HEK293T (cell line): ENCODE measurements at regions of chr7 and their contacts with region 1.

Region 1: DNA sequence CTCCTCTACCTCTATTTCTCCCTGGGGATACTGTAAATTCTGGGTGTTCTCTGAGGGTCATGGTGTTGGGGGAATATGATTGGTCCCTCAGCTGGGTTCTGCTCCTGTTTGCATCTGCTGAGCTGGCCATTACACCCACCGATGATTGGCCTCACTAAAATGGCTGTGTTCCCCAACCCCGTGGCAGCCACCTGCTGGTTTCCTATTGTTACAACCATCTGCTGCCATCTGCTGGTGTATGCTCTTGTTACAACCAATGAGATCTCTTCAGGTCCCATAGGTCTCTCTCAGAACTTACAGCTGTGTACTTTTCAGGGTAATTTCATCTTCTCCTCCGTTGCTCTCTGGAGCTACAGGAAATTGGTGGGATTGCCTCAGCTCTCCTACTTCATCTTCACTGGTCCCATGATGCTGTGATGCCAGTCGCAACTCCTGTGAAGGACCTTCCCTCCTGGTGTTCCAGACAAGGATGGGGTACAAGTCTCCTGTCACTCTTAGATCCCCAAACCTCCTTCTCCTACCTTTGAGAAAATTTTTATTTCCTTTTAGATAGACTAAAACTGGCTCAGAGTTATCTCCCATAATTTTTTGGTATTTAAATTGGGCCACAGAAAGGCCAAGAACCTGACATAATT is 303.5 kb upstream of the SMIM30 start:
- DNase-seq: peak; percentile 74

Region 2: DNA sequence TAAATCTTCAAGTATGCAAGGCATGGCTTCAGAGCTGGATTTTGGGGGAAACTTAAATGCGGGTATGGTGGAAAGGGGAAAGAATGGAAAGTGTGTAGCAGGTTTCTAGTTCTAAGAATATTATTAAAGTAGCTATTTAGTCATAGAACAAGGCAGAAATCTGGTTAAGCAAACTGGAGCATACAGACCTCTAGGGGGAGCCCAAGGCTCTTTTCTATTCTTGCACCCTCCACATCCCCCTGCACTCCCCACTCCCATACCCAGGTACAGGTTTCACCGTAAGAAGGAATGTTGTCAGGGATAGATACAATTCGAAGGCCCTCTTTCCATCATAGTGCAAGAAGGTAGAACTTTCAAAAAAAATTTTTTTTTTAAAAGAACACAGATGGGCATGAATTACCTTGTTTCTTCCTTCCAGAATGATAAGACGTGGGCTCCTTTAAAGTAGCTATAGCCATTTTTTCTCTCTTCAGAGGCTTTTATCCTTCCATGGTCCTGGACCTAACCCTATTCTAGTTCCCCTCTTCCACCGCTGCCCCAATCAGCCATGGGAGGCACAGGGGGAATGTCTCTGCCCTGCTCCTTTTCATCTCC is 262.0 kb before region 1 on chr7:
- CTCF ChIA-PET with region 1: interaction called, 19 read pairs
- POLR2A ChIA-PET with region 1: no interaction called
- DNase-seq: peak; percentile 60

Region 3: GRCh38 chr7:114310345-114311110 is 888.7 kb after region 1 on chr7:
- CTCF ChIA-PET with region 1: no interaction called
- POLR2A ChIA-PET with region 1: no interaction called
- DNase-seq: no peak